ENCODE measurements at regions of chr17 and their contacts with region 1.

Region 1: GRCh38 chr17:81101614-81102306 is 63.5 kb upstream of the PVALEF start:
- DNase-seq: no peak
- H3K4me3 ChIP-seq: no peak overlapping the region
- CTCF ChIP-seq: peak; percentile 100

Region 2: DNA sequence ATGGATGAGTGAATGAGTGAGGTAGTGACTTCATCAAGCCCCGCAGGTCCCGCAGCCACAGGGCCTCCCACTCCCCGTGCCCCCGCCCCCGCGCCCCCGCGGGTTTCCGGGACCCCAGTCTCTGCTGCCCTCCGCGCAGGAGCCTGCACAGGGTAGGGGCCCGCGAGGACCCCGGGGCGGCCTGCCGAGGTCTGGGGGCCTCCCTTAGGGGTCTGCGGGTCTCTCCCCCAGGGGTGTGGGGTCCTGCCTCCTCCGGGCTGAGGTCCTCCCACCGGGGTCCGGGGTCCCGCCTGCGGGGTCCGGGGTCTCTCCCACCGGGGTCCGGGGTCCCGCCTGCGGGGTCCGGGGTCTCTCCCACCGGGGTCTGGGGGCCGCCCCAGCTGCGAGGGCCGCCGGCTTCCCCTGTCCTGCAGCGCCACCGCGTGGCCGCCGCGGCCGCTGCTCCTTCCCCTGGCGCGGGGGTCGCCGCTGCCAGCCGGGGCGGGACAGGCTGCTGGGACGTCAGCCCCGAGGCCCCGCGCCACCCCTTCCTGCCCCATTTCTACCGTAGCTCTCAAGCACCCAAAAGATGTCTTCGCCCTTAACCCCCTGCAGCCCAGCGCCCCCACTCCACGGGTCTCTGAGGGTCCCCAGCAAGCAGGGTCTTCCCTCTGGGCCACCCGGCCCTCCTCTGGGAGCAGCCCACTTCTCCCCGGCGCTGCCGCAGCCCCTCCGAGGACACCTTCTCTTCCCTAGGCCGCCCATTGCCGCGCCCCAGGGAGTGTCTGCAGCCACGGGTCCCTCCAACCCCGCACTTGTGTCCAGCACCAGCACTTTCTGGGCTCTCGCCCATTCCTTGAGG is 120.5 kb before region 1 on chr17:
- CTCF ChIA-PET with region 1: interaction called, 135 read pairs
- POLR2A ChIA-PET with region 1: no interaction called
- DNase-seq: no peak
- H3K4me3 ChIP-seq: peak overlapping the region; percentile 36
- CTCF ChIP-seq: peak; percentile 59

Region 3: GRCh38 chr17:81009136-81009535 is 92.6 kb before region 1 on chr17:
- CTCF ChIA-PET with region 1: interaction called, 23 read pairs
- POLR2A ChIA-PET with region 1: no interaction called
- DNase-seq: no peak
- H3K4me3 ChIP-seq: no peak overlapping the region
- CTCF ChIP-seq: no peak

Region 4: GRCh38 chr17:81027591-81028505 is 73.9 kb before region 1 on chr17:
- CTCF ChIA-PET with region 1: interaction called, 178 read pairs
- POLR2A ChIA-PET with region 1: no interaction called
- DNase-seq: no peak
- H3K4me3 ChIP-seq: no peak overlapping the region
- CTCF ChIP-seq: no peak

Region 5: GRCh38 chr17:81118308-81119221 is 16.8 kb after region 1 on chr17:
- CTCF ChIA-PET with region 1: interaction called, 60 read pairs
- POLR2A ChIA-PET with region 1: no interaction called
- DNase-seq: no peak
- H3K4me3 ChIP-seq: peak overlapping the region; percentile 65
- CTCF ChIP-seq: no peak